Stomach (tissue), 19 donors: ENCODE measurements at regions of chr18 and their contacts with region 1.

Region 1: DNA sequence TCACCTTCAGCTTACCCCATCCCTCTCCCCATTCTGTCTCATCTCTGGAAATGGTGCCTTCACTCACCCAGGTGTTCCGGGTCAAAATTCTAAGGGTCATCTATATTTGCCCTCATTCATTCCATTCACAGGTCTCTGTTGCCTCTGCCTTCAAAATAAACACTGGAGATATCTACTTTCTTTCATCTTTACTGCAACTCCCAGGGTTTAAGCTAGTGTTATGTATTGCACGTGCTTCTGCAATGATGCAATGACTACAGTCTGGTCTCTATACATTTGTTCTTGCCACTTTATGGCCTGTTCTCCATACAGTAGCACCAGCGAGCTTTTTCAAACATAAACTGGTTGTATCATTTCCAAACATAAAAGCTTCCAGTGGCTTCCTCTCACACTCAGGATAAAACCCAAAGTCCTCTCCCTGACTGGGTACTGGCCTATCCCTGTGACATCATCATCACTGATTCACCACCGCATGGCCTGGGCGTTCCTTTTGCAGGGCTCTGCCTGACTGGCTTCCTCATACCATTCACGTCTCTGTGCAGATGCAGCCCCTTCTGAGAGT is 14.3 kb downstream of the DSG2 start:
- DNase-seq: peak; percentile 32 to 75
- H3K4me3 ChIP-seq: no peak overlapping the region
- H3K27ac ChIP-seq: peak overlapping the region in 1 of 5 donors; percentile 24
- H3K4me1 ChIP-seq: no peaks in the 10 kb centered on the region
- H3K27me3 ChIP-seq: no peaks in the 10 kb centered on the region
- CTCF ChIP-seq: no peak
- EP300 ChIP-seq: no peak
- POLR2A ChIP-seq: no peak

Region 2: GRCh38 chr18:31267823-31268481 is 244.3 kb before region 1 on chr18:
- intact Hi-C with region 1: no loop called
- DNase-seq: no peak
- H3K4me3 ChIP-seq: no peak overlapping the region
- H3K27ac ChIP-seq: no peak overlapping the region
- H3K4me1 ChIP-seq: peaks cover 0 to 18% (median 7%) of the 10 kb centered on the region in 4 donors
- H3K27me3 ChIP-seq: no peaks in the 10 kb centered on the region
- CTCF ChIP-seq: no peak
- EP300 ChIP-seq: no peak
- POLR2A ChIP-seq: no peak

Region 3: GRCh38 chr18:31343454-31343853 is 168.8 kb before region 1 on chr18:
- intact Hi-C with region 1: loop called (anchors 10 kb)
- DNase-seq: no peak
- H3K4me3 ChIP-seq: no peak overlapping the region
- H3K27ac ChIP-seq: no peak overlapping the region
- H3K4me1 ChIP-seq: no peaks in the 10 kb centered on the region
- H3K27me3 ChIP-seq: no peaks in the 10 kb centered on the region
- CTCF ChIP-seq: no peak
- EP300 ChIP-seq: no peak
- POLR2A ChIP-seq: no peak

Region 4: GRCh38 chr18:31407649-31408048 is 104.6 kb before region 1 on chr18:
- intact Hi-C with region 1: no loop called
- DNase-seq: no peak
- H3K4me3 ChIP-seq: no peak overlapping the region
- H3K27ac ChIP-seq: no peak overlapping the region
- H3K4me1 ChIP-seq: no peaks in the 10 kb centered on the region
- H3K27me3 ChIP-seq: no peaks in the 10 kb centered on the region
- CTCF ChIP-seq: no peak
- EP300 ChIP-seq: no peak
- POLR2A ChIP-seq: no peak